Activated naive CD4-positive, alpha-beta T cell treated with anti-CD3 and anti-CD28 coated beads for 36 hours (primary cell): ENCODE measurements at regions of chr9 and their contacts with region 1.

Region 1: DNA sequence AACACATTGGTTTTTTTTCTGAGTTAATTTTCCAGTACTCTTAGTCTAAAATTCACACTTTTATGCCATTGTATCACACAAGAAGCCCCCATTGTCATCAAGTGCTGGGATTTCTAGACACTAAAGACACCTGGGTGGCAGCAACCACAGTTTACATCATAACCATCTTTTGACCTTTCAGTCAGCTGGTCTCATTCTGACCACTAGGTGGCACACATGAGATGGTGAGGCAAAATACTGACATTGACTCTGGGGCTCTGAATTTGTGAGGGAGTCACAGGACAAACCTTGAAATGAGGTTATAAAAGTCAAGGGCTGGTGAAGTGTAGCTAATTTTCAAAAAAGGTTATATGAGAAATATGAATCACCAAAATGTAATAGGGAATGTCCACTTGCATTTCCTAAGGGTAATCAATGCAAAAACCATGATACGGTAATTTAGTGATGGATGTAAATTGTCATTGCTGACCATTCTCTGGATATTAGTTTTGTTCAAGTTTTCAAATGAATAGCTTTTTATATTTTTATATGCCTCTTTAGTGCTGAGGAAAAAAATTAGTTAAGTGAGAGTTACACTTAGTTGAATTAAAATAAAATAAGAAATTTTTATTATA is 229.4 kb downstream of the DMAC1 start:
- DNase-seq: peak; percentile 81
- H3K4me3 Mint-ChIP-seq: no peak overlapping the region
- H3K27ac Mint-ChIP-seq: no peak overlapping the region
- H3K4me1 Mint-ChIP-seq: no peaks in the 10 kb centered on the region
- H3K27me3 Mint-ChIP-seq: no peaks in the 10 kb centered on the region

Region 2: GRCh38 chr9:7489036-7489435 is 81.2 kb before region 1 on chr9:
- CTCF ChIA-PET with region 1: no interaction called
- intact Hi-C with region 1: no loop called
- DNase-seq: no peak
- H3K4me3 Mint-ChIP-seq: no peak overlapping the region
- H3K27ac Mint-ChIP-seq: no peak overlapping the region
- H3K4me1 Mint-ChIP-seq: no peaks in the 10 kb centered on the region
- H3K27me3 Mint-ChIP-seq: peaks cover 1% of the 10 kb centered on the region

Region 3: GRCh38 chr9:7613931-7614330 is 43.7 kb after region 1 on chr9:
- CTCF ChIA-PET with region 1: no interaction called
- intact Hi-C with region 1: loop called (anchors 1 kb)
- DNase-seq: peak; percentile 14
- H3K4me3 Mint-ChIP-seq: peak overlapping the region; percentile 5
- H3K27ac Mint-ChIP-seq: no peak overlapping the region
- H3K4me1 Mint-ChIP-seq: peaks cover 18% of the 10 kb centered on the region
- H3K27me3 Mint-ChIP-seq: no peaks in the 10 kb centered on the region

Region 4: GRCh38 chr9:7656636-7657035 is 86.4 kb after region 1 on chr9:
- CTCF ChIA-PET with region 1: interaction called, 5 read pairs
- intact Hi-C with region 1: loop called (anchors 1 kb)
- DNase-seq: no peak
- H3K4me3 Mint-ChIP-seq: no peak overlapping the region
- H3K27ac Mint-ChIP-seq: no peak overlapping the region
- H3K4me1 Mint-ChIP-seq: peaks cover 11% of the 10 kb centered on the region
- H3K27me3 Mint-ChIP-seq: no peaks in the 10 kb centered on the region

Region 5: DNA sequence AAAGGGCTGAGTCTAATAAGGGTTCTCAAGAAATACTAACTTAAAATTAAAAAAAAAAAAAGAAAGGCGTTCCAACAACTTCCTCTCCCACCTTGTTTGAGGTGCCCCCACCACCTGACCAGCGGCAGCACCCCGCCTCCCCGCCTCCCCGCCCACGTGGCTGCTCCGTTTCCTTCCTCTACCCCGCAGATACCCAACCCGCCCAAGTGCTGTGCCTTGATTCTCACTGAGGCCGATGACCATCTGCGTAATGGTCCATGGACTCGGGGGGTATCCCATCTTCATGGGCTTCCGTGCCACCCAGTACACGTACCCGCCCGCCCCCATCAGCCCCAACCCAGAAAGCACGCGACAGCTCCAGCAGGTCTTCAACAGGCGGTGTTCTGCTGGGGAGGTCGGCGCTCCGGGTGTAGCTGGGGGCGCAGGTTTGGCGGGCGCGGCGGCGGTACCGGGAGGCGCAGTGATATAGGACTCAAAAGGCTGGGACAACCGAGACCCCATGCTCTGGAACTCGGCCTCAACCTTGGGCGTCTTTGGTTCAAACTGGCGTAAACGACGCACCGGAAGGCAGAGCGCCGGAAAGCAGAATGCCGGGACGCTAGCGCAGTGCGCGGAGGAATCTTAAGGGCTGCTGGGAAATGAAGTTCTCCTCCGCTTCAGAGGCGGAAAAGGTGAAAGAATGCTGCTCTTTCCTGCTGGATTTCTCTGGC is 229.2 kb after region 1 on chr9 and contains the start of gene DMAC1:
- CTCF ChIA-PET with region 1: no interaction called
- intact Hi-C with region 1: loop called (anchors 10 kb)
- DNase-seq: peak; percentile 82
- H3K4me3 Mint-ChIP-seq: peak within 1 kb of the TSS; percentile 91
- H3K27ac Mint-ChIP-seq: peak within 1 kb of the TSS; percentile 94
- H3K4me1 Mint-ChIP-seq: peaks cover 28% of the 10 kb centered on the region
- H3K27me3 Mint-ChIP-seq: no peaks in the 10 kb centered on the region
- total RNA-seq, gene DMAC1: 51.1 to 52.1 TPM

Region 6: DNA sequence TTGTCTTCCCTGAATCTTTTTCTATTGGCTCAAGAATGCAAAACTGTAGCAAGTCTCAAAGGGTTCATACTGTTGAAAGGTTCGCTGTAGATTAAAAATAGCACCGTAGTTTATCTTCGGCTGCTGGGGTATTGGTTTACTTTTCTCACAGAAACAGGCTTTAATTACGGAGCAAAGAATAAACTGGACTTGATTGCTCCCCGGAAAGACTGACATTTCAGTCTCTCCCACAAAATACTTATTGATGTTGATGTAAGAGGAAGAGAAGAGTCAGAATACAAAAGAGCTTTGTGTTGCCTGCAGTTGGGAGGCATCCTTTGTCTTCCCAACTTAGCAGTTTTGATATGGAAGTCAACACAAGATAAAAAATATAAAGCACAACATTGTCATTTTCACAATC is 413.3 kb after region 1 on chr9:
- CTCF ChIA-PET with region 1: no interaction called
- intact Hi-C with region 1: loop called (anchors 5 kb)
- DNase-seq: no peak
- H3K4me3 Mint-ChIP-seq: no peak overlapping the region
- H3K27ac Mint-ChIP-seq: no peak overlapping the region
- H3K4me1 Mint-ChIP-seq: peaks cover 43% of the 10 kb centered on the region
- H3K27me3 Mint-ChIP-seq: no peaks in the 10 kb centered on the region

Region 7: GRCh38 chr9:8179381-8180053 is 609.3 kb after region 1 on chr9:
- CTCF ChIA-PET with region 1: no interaction called
- intact Hi-C with region 1: loop called (anchors 5 kb)
- DNase-seq: no peak
- H3K4me3 Mint-ChIP-seq: no peak overlapping the region
- H3K27ac Mint-ChIP-seq: no peak overlapping the region
- H3K4me1 Mint-ChIP-seq: no peaks in the 10 kb centered on the region
- H3K27me3 Mint-ChIP-seq: no peaks in the 10 kb centered on the region

Region 8: DNA sequence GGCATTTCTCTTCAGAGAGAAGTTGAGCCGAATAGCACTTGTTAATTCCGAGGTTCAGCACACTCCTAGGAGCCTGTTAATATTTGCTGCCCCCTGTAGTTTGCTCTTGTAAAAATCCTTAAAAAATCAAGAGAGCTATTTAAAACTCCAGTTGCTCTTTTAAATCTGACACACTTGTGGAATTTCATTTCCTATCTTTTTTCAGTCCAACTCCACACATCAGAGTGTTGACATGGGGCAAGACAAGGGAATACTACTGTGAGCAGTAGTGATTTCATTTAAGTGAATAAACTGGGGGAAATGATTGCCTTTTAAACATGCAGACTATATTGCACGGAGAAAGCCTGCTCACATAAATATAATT is 1325.6 kb after region 1 on chr9:
- CTCF ChIA-PET with region 1: no interaction called
- intact Hi-C with region 1: loop called (anchors 1 kb)
- DNase-seq: no peak
- H3K4me3 Mint-ChIP-seq: no peak overlapping the region
- H3K27ac Mint-ChIP-seq: no peak overlapping the region
- H3K4me1 Mint-ChIP-seq: no peaks in the 10 kb centered on the region
- H3K27me3 Mint-ChIP-seq: peaks cover 6% of the 10 kb centered on the region